ENCODE measurements at regions of chr18 and their contacts with region 1.

Region 1: GRCh38 chr18:21740724-21741510 is at the start of gene MIB1:
- DNase-seq: peak in 40 of 42 donors; percentile 35 to 99 (median 68)

Region 2: GRCh38 chr18:21439446-21439846 is 301.5 kb before region 1 on chr18:
- intact Hi-C with region 1: no loop called
- DNase-seq: no peak

Region 3: GRCh38 chr18:21704603-21705364 is 36.1 kb before region 1 on chr18 and contains the start of gene ABHD3:
- intact Hi-C with region 1: loop called (anchors 1 kb)
- DNase-seq: peak; percentile 78 to 96 (median 92)

Region 4: DNA sequence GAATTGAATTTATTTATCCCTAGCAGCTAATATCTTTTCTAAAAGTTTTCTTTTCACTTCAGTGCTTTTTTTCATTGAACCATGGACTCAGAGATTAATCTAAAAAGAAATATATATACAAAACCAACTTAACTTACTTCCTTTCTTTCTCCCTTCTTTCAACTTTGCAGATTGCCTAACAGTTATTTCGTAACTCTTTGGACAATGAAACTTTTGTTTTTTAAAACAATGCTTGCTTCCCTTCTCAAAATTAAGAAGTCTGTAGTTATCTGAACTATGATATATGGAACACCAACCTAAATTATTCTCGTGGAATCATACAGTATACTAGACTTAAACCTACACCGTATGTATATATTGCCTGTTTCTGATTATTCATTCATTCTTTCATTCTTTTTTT is 62.6 kb after region 1 on chr18:
- intact Hi-C with region 1: no loop called
- DNase-seq: no peak

Region 5: GRCh38 chr18:21820035-21820810 is 79.3 kb after region 1 on chr18:
- intact Hi-C with region 1: no loop called
- DNase-seq: no peak

Region 6: GRCh38 chr18:21997207-21998143 is 256.6 kb after region 1 on chr18:
- intact Hi-C with region 1: no loop called
- DNase-seq: peak in 2 of 42 donors; percentile 4 to 21

Measured in head of caudate nucleus (tissue), 42 donors.